PC-9 (cell line): ENCODE measurements at regions of chr12 and their contacts with region 1.

Region 1: GRCh38 chr12:103548622-103549601 is 38.2 kb upstream of the STAB2 start:
- DNase-seq: peak; percentile 58 to 61
- H3K4me3 ChIP-seq: no peak overlapping the region
- H3K27ac ChIP-seq: no peak overlapping the region
- H3K4me1 ChIP-seq: no peaks in the 10 kb centered on the region
- H3K27me3 ChIP-seq: peaks cover 16% of the 10 kb centered on the region
- CTCF ChIP-seq: peak; percentile 95

Region 2: GRCh38 chr12:102879144-102879763 is 669.7 kb before region 1 on chr12:
- CTCF ChIA-PET with region 1: no interaction called
- POLR2A ChIA-PET with region 1: no interaction called
- intact Hi-C with region 1: loop called (anchors 1 kb)
- DNase-seq: peak; percentile 29 to 63
- H3K4me3 ChIP-seq: no peak overlapping the region
- H3K27ac ChIP-seq: no peak overlapping the region
- H3K4me1 ChIP-seq: no peaks in the 10 kb centered on the region
- H3K27me3 ChIP-seq: no peaks in the 10 kb centered on the region
- CTCF ChIP-seq: peak; percentile 59

Region 3: GRCh38 chr12:102948941-102949352 is 600.0 kb before region 1 on chr12:
- CTCF ChIA-PET with region 1: no interaction called
- POLR2A ChIA-PET with region 1: no interaction called
- intact Hi-C with region 1: loop called (anchors 1 kb)
- DNase-seq: peak in 1 of 2 experiments; percentile 19
- H3K4me3 ChIP-seq: no peak overlapping the region
- H3K27ac ChIP-seq: no peak overlapping the region
- H3K4me1 ChIP-seq: no peaks in the 10 kb centered on the region
- H3K27me3 ChIP-seq: peaks cover 23% of the 10 kb centered on the region; the same call in 1 of the 2 replicates
- CTCF ChIP-seq: peak; percentile 95

Region 4: DNA sequence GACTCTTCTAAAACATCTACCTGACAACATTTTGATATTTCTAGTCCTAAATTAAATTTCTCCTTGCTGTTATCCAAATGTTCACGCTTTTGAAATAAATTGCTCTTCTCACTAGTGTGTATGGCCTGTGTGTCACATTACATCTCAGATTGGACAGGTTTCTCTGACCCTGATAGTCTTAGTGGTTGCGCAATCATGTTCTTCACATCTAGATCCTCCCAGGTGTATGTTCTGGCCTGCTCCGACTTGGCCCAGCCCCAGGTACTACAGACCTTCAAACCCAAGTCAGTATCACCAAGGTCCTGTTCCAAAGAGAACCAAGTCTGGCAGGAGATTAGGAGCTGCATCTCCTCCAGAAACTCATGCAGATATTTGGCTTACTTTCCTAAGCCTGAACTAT is 382.0 kb before region 1 on chr12:
- CTCF ChIA-PET with region 1: no interaction called
- POLR2A ChIA-PET with region 1: no interaction called
- intact Hi-C with region 1: no loop called
- DNase-seq: no peak
- H3K4me3 ChIP-seq: no peak overlapping the region
- H3K27ac ChIP-seq: no peak overlapping the region
- H3K4me1 ChIP-seq: no peaks in the 10 kb centered on the region
- H3K27me3 ChIP-seq: no peaks in the 10 kb centered on the region
- CTCF ChIP-seq: no peak

Region 5: DNA sequence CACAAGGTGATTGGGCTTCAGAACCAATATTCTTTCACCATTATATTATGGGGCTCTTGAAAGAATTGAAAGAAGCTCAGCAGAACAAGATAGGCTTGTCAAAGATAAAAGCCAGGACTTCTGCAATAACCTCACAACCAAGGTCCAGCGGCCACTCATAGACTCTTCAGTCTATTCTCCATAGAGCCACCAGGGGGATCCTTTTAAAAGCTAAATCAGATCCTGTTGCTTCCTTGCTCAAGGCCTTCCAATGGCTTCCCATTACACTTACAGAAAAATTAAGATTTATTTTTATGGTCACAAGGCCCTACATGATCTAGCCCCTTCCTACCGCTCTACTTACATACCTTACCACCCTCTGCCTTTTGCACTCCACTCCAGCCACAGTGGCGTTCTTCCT is 222.7 kb before region 1 on chr12:
- CTCF ChIA-PET with region 1: no interaction called
- POLR2A ChIA-PET with region 1: no interaction called
- intact Hi-C with region 1: loop called (anchors 5 kb)
- DNase-seq: no peak
- H3K4me3 ChIP-seq: no peak overlapping the region
- H3K27ac ChIP-seq: no peak overlapping the region
- H3K4me1 ChIP-seq: no peaks in the 10 kb centered on the region
- H3K27me3 ChIP-seq: peaks cover 9% of the 10 kb centered on the region; the same call in 1 of the 2 replicates
- CTCF ChIP-seq: peak; percentile 57

Region 6: DNA sequence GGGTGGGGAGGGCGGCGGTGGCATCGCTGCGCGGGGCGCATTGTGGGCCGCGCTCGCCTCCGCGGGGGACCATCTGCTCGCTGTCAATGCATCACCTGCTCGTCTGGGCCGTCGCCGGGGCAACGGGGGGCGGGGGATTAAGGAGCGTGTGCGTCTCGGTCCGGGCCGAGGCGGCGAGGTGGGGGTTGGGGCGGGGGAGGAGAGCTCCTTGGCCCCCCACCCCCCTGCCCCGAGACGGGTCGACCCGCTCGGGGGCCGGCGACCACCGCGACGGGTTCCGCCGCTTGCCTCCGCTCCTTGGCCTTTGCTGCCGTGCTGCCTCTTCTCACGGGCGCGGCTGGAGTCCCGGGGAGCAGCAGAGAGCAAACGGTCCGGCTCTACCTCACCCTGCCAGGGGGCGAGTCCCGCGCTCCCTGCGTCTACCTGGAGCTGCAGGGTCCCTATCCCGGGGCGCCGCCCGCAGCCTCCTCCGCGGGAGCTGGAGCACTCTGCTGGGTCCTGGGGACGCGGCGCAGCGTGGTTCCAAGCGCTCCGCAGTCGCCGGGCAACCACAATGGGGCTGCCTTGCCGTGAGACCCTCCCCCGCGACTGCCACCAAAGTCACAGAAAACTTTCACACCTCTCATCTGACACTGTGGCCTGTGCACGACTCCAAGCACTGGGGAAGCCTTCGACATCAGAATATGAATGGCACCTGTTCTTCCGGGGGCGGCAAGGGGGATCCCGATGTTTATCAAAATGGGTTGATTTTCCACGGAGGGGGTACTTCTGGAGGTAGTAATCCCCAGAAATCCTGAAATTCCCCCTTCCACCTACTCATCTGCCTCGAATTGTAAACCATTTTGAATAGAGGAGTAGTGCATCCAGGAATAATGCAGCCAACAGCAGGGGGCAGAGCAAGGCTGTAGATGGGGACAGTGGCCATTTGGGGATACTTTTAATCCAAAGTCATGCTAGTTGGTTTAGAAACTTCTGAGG is 53.1 kb before region 1 on chr12 and contains the start of gene C12orf42:
- CTCF ChIA-PET with region 1: no interaction called
- POLR2A ChIA-PET with region 1: no interaction called
- intact Hi-C with region 1: loop called (anchors 2 kb)
- DNase-seq: peak in 1 of 2 experiments; percentile 35
- H3K4me3 ChIP-seq: no peak within 1 kb of the TSS
- H3K27ac ChIP-seq: no peak within 1 kb of the TSS
- H3K4me1 ChIP-seq: no peaks in the 10 kb centered on the region
- H3K27me3 ChIP-seq: no peaks in the 10 kb centered on the region
- CTCF ChIP-seq: peak; percentile 37; the same call in 1 of the 2 replicates
- total RNA-seq, gene C12orf42: not detected in 2 replicates